Activated CD4-positive, alpha-beta memory T cell treated with anti-CD3 and anti-CD28 coated beads, Interleukin-2, amount 10 ng/mL, durations not matched to agents 7 days and 5 days (primary cell): ENCODE measurements at regions of chr6 and their contacts with region 1.

Region 1: DNA sequence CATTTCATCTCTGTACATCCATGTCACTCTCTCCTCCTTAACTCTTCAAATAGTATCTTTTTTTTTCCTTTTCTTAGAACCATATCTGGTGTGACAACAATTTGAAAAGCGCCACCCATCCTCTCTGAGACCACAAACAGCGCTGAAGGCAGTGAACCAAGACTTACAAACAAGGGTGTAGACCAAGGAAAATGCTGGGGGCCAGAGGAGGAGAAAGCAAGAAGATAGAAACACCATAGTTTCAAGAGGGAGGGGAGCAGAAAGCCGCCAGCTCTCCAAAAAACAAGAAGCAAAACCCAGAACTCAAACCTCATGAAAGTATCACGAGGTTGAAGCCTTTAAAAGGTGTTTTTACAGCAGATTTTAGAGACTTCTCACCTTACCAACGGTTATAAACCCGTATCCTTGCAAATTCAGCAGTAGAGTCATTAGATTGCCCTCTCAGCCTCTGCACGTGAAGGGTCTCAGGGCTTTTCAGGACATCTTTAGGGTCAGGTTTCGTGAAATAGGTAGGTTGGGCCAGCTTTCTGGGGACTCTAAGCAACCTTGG is 13.3 kb upstream of the RIPOR2 start:
- DNase-seq: peak; percentile 85
- H3K4me3 Mint-ChIP-seq: peak overlapping the region; percentile 40
- H3K27ac Mint-ChIP-seq: peak overlapping the region; percentile 95
- H3K4me1 Mint-ChIP-seq: peaks cover 74% of the 10 kb centered on the region
- H3K27me3 Mint-ChIP-seq: no peaks in the 10 kb centered on the region

Region 2: GRCh38 chr6:24802271-24803059 is 146.6 kb before region 1 on chr6:
- CTCF ChIA-PET with region 1: no interaction called
- POLR2A ChIA-PET with region 1: no interaction called
- DNase-seq: no peak
- H3K4me3 Mint-ChIP-seq: no peak overlapping the region
- H3K27ac Mint-ChIP-seq: no peak overlapping the region
- H3K4me1 Mint-ChIP-seq: peaks cover 6% of the 10 kb centered on the region
- H3K27me3 Mint-ChIP-seq: no peaks in the 10 kb centered on the region

Region 3: DNA sequence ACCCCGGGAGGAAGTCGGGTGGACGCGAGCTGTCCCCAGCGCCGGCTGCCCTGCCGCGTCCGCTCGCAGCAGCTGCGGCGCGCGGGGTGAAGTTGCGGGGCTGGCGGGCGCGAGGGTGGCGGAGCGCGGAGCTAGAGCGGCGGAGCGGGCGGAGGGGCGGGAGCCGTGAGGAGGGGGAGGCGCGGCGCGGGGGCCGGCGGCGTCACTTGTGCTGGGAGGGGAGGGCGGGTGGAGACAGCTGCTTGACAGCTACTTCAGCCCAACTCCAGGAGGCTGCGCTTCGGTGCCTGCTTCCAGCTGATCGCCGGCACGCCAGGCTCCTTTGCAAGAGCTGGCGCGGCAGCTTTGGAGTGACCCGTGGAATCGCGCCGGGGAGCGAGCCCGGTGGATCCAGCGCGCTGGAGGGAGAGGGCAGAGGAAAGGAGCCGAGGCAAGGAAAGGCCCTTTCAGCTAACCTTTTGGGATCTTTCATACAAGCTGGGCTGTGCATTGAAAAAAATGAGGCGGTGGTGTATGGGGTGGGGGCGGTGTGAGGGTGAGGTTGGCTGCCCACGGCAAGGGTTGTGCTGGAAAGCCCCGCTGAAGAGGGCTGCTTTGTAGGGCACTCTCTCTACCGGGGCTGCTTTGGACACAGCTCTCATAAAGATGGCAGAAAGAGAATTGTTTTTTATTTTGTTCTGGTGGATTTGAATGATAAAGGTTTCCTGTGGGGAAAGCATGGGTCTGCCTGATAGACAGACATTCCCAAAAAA is 38.0 kb before region 1 on chr6:
- CTCF ChIA-PET with region 1: interaction called, 3 read pairs
- POLR2A ChIA-PET with region 1: interaction called, 39 read pairs
- DNase-seq: peak; percentile 46
- H3K4me3 Mint-ChIP-seq: peak overlapping the region; percentile 76
- H3K27ac Mint-ChIP-seq: peak overlapping the region; percentile 79
- H3K4me1 Mint-ChIP-seq: peaks cover 90% of the 10 kb centered on the region
- H3K27me3 Mint-ChIP-seq: no peaks in the 10 kb centered on the region

Region 4: DNA sequence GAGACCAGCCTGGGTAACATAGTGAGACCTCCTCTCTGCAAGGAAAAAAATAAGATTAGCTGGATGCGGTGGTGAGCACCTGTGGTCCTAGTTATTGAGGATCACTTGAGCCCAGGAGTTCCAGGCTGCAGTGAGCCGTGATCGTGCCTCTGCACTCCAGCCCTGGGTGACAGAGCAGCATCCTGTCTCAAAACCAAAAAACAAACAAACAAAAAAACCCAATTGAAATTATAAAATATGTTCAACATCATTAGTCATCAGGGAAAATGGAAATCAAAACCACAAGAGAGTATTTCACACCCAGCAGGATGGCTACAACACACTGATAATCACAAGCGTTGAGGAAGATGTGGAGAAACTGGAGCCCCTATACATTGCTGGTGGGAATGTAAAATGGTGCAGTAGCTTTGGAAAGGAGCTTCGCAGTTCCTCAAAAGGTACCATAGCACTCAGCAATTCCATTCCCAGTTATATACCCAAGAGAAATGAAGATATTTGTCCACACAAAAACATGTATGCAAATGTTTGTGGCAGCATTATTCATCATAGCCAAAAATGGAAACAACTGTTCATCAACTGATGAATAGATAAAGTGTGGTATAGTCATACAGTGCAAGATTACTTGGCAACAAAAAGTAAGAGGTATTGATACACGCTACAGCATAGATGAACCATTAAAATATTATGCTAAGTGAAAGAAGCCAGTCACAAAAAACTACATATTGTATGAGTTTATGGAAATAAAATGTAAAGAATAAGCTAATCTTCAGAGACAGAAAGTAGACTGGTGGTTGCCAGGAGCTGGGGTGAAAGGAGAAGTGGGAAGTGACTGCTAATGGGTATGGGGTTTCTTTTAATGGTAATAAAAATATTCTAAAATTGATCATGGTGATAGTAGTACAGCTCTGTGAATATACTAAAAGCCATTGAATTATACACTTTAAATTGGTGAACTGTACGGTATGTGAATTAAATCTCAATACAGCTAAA is 25.4 kb after region 1 on chr6:
- CTCF ChIA-PET with region 1: no interaction called
- POLR2A ChIA-PET with region 1: interaction called, 60 read pairs
- DNase-seq: peak; percentile 64
- H3K4me3 Mint-ChIP-seq: peak overlapping the region; percentile 32
- H3K27ac Mint-ChIP-seq: peak overlapping the region; percentile 85
- H3K4me1 Mint-ChIP-seq: peaks cover 37% of the 10 kb centered on the region
- H3K27me3 Mint-ChIP-seq: no peaks in the 10 kb centered on the region

Region 5: DNA sequence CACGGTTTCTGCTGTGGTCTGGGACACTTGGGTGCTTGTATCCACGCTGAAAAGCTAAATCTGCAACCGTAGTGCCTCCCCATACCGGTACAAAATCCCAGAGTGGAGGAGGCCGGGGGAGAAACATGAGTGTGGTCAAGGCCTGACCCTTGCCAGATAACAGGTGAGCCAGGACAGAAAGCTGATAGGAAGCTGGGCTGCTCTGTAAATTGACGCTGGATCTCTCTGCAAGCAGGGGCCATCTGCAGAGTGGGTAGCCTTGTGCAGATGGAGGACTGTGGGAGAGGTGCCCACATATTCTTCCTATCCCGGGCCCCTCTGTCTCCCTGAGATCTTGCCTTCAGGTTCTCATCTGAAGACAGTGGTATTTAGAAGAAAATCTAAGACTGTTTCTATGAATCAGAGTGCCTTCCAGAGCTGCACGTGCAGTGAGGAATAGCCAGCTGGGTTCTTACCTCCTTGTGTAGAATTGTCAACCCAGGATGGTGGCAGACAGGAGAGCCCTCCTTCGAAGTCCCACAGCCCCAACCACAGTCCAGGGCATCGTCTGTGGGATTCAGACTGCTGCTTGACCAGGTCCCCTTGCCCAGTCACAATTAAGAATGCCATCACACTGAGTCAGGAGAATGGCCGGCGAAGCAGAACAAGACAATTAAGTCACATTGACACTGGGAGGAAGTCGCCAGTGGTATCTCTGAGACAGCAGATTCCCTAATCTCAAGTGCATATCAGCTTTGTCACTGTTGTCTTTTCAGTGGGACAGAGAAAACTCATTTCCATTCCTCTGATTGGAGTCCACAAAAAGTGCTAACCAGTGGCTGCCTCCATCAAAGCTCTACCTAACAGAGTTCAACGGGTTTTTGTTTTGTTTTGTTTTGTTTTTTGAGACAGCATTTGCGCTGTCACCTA is 86.7 kb after region 1 on chr6:
- CTCF ChIA-PET with region 1: no interaction called
- POLR2A ChIA-PET with region 1: interaction called, 10 read pairs
- DNase-seq: peak; percentile 45
- H3K4me3 Mint-ChIP-seq: peak overlapping the region; percentile 95
- H3K27ac Mint-ChIP-seq: peak overlapping the region; percentile 95
- H3K4me1 Mint-ChIP-seq: peaks cover 69% of the 10 kb centered on the region
- H3K27me3 Mint-ChIP-seq: no peaks in the 10 kb centered on the region